Sigmoid colon (tissue), 7 donors: ENCODE measurements at regions of chr16 and their contacts with region 1.

Region 1: GRCh38 chr16:1610276-1611017 is 1.4 kb downstream of the IFT140 start:
- DNase-seq: peak; percentile 94
- H3K4me3 ChIP-seq: peak overlapping the region; percentile 75 to 92 (median 86)
- H3K27ac ChIP-seq: peak overlapping the region; percentile 84 to 93 (median 87)
- H3K4me1 ChIP-seq: peaks cover 0 to 46% (median 37%) of the 10 kb centered on the region in 4 donors
- H3K27me3 ChIP-seq: no peaks in the 10 kb centered on the region
- CTCF ChIP-seq: no peak
- EP300 ChIP-seq: peak in 1 of 4 donors; percentile 11
- POLR2A ChIP-seq: no peak

Region 2: GRCh38 chr16:1420111-1420540 is 190.3 kb before region 1 on chr16:
- intact Hi-C with region 1: loop called (anchors 5 kb)
- DNase-seq: no peak
- H3K4me3 ChIP-seq: peak overlapping the region; percentile 74 to 98 (median 92)
- H3K27ac ChIP-seq: peak overlapping the region; percentile 91 to 95 (median 94)
- H3K4me1 ChIP-seq: peaks cover 0 to 36% (median 20%) of the 10 kb centered on the region in 4 donors
- H3K27me3 ChIP-seq: no peaks in the 10 kb centered on the region
- CTCF ChIP-seq: no peak
- EP300 ChIP-seq: no peak
- POLR2A ChIP-seq: no peak

Region 3: DNA sequence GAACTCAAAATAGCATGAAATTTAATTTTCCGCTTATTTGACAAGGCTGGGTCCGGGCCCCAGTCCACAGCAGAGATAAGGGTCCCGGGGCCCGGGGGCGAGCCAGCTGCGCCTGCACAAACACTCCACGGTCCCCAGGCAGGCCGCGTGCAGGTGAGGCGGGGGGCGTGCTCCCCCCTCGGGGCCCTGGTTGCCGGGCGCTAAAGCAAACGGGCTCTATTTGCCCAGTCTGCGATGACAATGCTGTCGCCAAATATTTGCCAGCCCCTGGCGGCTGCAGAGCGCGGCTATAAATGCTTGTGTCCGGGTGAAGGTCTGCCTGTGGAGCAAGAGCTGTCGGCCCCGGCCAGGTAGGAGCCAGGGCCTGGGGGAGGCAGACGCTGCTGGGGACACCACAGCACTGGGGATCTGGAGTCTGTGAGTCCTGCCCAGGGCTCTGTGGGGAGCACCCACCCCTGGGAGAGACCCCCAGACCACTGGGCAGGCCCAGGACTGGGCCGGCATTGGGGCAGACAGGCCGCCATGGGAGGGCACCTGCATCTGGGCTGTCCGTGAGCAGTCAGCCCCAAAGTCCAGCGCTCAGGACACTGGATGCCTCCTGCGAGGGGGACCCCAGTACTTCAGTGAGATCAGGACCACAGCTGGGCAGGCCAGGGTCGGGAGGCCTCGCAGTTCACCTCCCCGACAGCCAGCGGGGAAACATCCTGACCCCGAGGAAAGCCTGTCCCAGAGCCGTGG is 179.5 kb before region 1 on chr16 and contains the start of gene PERCC1:
- intact Hi-C with region 1: no loop called
- DNase-seq: no peak
- H3K4me3 ChIP-seq: no peak within 1 kb of the TSS
- H3K27ac ChIP-seq: no peak within 1 kb of the TSS
- H3K4me1 ChIP-seq: peaks cover 0 to 7% (median 0%) of the 10 kb centered on the region in 4 donors
- H3K27me3 ChIP-seq: no peaks in the 10 kb centered on the region
- CTCF ChIP-seq: no peak
- EP300 ChIP-seq: no peak
- POLR2A ChIP-seq: no peak
- total RNA-seq, gene PERCC1: not detected

Region 4: DNA sequence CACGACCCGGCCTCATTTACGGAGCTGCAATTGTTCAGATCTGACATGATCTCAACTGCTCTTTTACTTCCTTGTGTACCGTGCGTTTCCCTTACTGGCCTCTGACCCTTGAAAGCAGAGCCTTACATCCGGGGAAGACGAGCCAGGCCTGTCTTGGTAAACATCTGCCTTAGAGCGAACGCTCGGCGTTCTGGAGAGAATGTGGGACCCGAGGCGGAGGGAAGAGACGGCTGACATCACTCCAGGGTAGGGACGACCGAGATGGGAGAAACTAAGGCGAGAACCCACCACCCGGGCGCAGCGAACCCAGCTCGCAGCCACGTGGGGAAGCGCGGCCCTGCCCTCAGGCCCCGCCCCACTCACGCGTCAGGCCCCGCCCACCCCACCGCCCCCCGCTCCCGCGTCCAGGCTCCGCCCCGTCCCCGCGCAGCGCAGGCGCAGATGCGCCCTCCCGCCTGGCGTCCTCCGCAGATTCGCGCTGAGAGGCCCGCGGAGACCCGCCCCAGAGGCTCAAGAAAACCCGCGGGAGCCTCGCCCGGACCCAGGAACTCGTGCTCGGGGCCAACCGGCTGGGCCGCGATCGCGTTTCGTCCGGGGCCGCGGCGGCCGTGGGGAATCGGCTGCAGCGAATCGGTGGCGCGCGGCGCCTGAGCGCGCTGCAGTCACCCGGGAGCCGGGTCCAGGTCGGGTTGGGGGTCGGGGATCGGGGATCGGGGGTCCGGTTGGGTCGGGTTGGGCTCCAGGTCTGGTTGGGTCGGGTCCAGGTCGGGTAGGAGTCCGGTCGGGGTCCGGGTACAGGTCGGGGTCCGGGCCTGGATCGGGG is 117.3 kb before region 1 on chr16 and contains the start of gene TELO2:
- intact Hi-C with region 1: loop called (anchors 5 kb)
- DNase-seq: peak; percentile 89
- H3K4me3 ChIP-seq: peak within 1 kb of the TSS; percentile 72 to 84 (median 79)
- H3K27ac ChIP-seq: peak within 1 kb of the TSS; percentile 87 to 93 (median 88)
- H3K4me1 ChIP-seq: peaks cover 0 to 30% (median 25%) of the 10 kb centered on the region in 4 donors
- H3K27me3 ChIP-seq: no peaks in the 10 kb centered on the region
- CTCF ChIP-seq: no peak
- EP300 ChIP-seq: no peak
- POLR2A ChIP-seq: no peak
- total RNA-seq, gene TELO2: 12.5 to 31.3 (median 18.1) TPM